ENCODE measurements at regions of chr20 and their contacts with region 1.

Region 1: GRCh38 chr20:23050847-23051631 is 1.6 kb upstream of the THBD start:
- DNase-seq: peak; percentile 94
- ATAC-seq: peak; percentile 64
- H3K4me3 Mint-ChIP-seq: peak overlapping the region; percentile 89
- H3K27ac Mint-ChIP-seq: no peak overlapping the region; the same call in 1 of the 2 replicates
- H3K4me1 Mint-ChIP-seq: peaks cover 17% of the 10 kb centered on the region
- H3K27me3 Mint-ChIP-seq: peaks cover 75% of the 10 kb centered on the region
- CTCF ChIP-seq: peak; percentile 89

Region 2: DNA sequence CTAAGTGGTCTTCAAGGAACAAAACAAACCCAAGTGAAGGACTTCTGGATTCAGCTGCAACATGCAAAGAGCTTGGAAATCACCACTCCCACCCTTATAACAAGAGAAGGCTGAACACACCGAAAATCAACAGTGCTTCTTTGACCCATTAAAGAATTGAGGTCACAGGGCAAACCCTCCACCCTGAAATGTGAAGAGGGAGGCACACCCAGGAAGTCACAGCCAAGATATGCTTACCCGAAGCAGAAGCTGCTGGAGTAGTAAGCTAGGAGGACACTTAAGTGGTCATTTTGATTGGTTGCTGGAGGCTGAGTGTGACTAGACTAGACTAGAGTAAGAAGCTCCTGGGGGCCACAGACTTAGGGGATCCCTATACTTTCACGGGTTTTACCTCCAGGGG is 204.2 kb before region 1 on chr20:
- CTCF ChIA-PET with region 1: interaction called, 21 read pairs
- POLR2A ChIA-PET with region 1: no interaction called
- DNase-seq: no peak
- ATAC-seq: no peak
- H3K4me3 Mint-ChIP-seq: no peak overlapping the region
- H3K27ac Mint-ChIP-seq: no peak overlapping the region
- H3K4me1 Mint-ChIP-seq: 0 out of 2 replicates have a peak, but pooled peaks cover 3% of the 10 kb centered on the region
- H3K27me3 Mint-ChIP-seq: no peaks in the 10 kb centered on the region
- CTCF ChIP-seq: no peak

Region 3: DNA sequence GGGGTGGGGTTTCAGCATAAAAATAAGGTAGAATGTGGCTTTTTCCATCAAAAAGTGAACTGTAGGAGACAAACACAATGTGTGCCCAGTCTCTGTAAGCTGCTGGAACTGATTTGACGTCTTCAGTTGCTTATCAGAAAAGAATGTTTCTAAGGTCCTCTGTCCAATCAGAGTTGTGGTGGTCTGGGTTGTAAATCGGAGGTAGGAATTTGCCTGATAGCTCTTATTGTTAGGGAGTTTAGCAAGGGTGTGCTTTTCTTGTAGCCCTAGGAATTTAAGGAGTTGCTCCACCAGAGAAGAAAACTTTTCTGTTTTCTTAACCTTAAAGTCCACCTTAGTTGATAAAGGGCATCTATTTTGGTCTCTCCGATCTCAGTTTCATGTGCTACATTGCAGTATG is 26.3 kb before region 1 on chr20:
- CTCF ChIA-PET with region 1: no interaction called
- POLR2A ChIA-PET with region 1: no interaction called
- DNase-seq: no peak
- ATAC-seq: no peak
- H3K4me3 Mint-ChIP-seq: no peak overlapping the region
- H3K27ac Mint-ChIP-seq: no peak overlapping the region
- H3K4me1 Mint-ChIP-seq: peaks cover 15% of the 10 kb centered on the region
- H3K27me3 Mint-ChIP-seq: no peaks in the 10 kb centered on the region; the same call in 1 of the 2 replicates
- CTCF ChIP-seq: no peak

Region 4: DNA sequence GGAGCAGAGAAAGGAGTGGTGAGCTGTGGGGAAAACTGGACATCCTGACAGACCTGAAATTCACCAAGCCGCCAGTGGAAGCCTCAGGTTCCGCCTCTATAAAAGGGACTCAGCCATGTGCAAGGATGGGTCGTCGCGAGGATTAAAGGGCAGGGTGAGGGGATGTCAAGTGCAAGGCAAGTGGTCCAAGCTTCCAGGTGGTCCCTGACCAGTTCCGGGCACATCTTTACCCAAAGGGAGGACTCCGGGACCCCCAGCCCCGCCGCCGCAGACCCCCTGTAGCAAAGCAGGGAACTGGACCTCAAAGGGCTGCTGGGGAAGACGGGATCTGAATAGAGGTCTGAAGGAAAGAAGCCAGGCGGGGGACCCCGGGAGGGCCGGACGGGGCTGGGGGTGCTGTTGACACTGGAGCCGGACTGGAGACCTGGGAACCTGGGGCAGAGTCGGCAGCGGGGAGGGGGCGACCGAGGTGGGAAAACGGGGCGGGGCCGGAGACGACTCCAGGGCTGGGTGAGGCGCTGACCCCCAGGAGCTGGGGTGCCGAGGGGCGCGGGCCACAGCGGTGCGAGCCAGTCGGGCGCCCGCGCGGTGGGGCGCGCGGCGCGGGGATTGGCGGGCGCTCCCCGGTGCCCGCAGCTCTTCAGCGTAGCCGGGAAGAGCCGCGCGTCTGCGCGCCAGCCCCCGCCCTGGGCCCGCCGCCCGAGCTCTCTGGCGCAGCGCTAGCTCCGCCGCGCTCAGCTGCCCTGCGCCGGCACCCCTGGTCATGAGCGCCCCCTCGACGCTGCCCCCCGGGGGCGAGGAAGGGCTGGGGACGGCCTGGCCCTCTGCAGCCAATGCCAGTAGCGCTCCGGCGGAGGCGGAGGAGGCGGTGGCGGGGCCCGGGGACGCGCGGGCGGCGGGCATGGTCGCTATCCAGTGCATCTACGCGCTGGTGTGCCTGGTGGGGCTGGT is 16.0 kb before region 1 on chr20 and contains the start of gene SSTR4:
- CTCF ChIA-PET with region 1: interaction called, 25 read pairs
- POLR2A ChIA-PET with region 1: no interaction called
- DNase-seq: no peak
- ATAC-seq: peak; percentile 84
- H3K4me3 Mint-ChIP-seq: peak within 1 kb of the TSS; percentile 48
- H3K27ac Mint-ChIP-seq: no peak within 1 kb of the TSS
- H3K4me1 Mint-ChIP-seq: peaks cover 7% of the 10 kb centered on the region
- H3K27me3 Mint-ChIP-seq: peaks cover 75% of the 10 kb centered on the region
- CTCF ChIP-seq: no peak
- total RNA-seq, gene SSTR4: not detected in 3 replicates

Region 5: DNA sequence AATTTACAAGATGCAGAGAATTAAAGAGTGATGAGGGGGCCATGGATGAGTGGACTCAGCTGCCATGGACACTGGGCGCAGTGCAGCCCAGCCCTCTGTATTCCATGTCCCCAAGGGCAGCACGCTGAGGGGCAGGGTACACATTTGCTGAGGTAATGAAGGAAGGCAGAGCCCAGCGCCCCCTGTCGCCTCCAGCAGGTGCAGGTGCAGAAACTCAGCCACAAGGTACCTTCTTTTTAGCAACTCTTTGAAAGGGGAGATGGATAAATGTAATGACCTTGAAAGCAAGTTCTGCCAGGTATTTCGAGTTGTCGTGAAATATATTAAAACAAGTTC is 27.9 kb after region 1 on chr20:
- CTCF ChIA-PET with region 1: interaction called, 12 read pairs
- POLR2A ChIA-PET with region 1: no interaction called
- DNase-seq: peak; percentile 69
- ATAC-seq: peak; percentile 76
- H3K4me3 Mint-ChIP-seq: no peak overlapping the region
- H3K27ac Mint-ChIP-seq: no peak overlapping the region
- H3K4me1 Mint-ChIP-seq: peaks cover 27% of the 10 kb centered on the region
- H3K27me3 Mint-ChIP-seq: no peaks in the 10 kb centered on the region; the same call in 1 of the 2 replicates
- CTCF ChIP-seq: peak; percentile 32; the same call in 1 of the 2 replicates

Region 6: DNA sequence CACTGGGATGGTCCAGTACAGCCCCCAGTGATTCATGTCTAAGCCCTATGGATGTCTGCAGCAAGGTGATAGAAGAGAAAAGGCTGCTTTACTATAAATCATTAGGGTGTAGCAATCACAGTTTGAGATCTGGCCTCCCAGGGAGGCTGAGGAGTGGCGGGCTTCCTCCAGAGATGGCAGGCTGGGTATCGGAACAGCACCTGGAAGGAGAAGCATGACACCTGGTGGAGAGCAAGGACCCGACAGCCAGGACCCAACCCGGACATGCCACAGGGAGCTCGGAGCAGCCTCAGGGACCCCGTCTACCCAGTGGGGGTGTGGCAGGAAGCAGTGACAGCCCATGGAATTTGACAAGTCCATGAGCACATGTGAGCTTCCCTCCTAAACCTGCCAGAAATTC is 149.9 kb after region 1 on chr20:
- CTCF ChIA-PET with region 1: interaction called, 126 read pairs
- POLR2A ChIA-PET with region 1: no interaction called
- DNase-seq: peak; percentile 77
- ATAC-seq: peak; percentile 92
- H3K4me3 Mint-ChIP-seq: no peak overlapping the region
- H3K27ac Mint-ChIP-seq: no peak overlapping the region
- H3K4me1 Mint-ChIP-seq: peaks cover 20% of the 10 kb centered on the region
- H3K27me3 Mint-ChIP-seq: peaks cover 13% of the 10 kb centered on the region
- CTCF ChIP-seq: peak; percentile 35; the same call in 1 of the 2 replicates

Region 7: GRCh38 chr20:23235173-23236027 is 184.4 kb after region 1 on chr20:
- CTCF ChIA-PET with region 1: interaction called, 35 read pairs
- POLR2A ChIA-PET with region 1: no interaction called
- DNase-seq: peak; percentile 78
- ATAC-seq: peak; percentile 100
- H3K4me3 Mint-ChIP-seq: no peak overlapping the region
- H3K27ac Mint-ChIP-seq: no peak overlapping the region
- H3K4me1 Mint-ChIP-seq: no peaks in the 10 kb centered on the region
- H3K27me3 Mint-ChIP-seq: peaks cover 24% of the 10 kb centered on the region
- CTCF ChIP-seq: peak; percentile 87

Region 8: DNA sequence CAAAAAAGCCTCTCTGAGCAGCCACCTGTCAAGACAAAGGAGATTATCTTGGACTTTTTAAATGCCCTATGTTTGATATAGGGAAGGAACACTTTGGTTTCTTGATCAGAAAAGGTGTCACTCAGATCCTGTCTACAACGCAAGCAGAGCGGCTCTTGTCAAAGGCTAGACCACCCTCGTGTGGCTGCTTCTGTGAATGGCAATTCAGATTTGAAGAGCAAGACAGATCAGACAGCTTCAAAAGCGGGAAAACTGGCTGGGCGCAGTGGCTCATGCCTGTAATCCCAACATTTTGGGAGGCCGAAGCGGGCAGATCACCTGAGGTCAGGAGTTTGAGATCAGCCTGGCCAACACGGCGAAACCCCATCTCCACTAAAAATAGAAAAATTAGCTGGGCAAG is 289.5 kb after region 1 on chr20:
- CTCF ChIA-PET with region 1: interaction called, 41 read pairs
- POLR2A ChIA-PET with region 1: no interaction called
- DNase-seq: peak; percentile 74
- ATAC-seq: peak; percentile 92
- H3K4me3 Mint-ChIP-seq: no peak overlapping the region
- H3K27ac Mint-ChIP-seq: no peak overlapping the region
- H3K4me1 Mint-ChIP-seq: peaks cover 13% of the 10 kb centered on the region
- H3K27me3 Mint-ChIP-seq: no peaks in the 10 kb centered on the region; the same call in 1 of the 2 replicates
- CTCF ChIP-seq: 0 out of 2 replicates have a peak, but pooled peaks have one; percentile 21